Sigmoid colon (tissue), 7 donors: ENCODE measurements at regions of chr12 and their contacts with region 1.

Region 1: DNA sequence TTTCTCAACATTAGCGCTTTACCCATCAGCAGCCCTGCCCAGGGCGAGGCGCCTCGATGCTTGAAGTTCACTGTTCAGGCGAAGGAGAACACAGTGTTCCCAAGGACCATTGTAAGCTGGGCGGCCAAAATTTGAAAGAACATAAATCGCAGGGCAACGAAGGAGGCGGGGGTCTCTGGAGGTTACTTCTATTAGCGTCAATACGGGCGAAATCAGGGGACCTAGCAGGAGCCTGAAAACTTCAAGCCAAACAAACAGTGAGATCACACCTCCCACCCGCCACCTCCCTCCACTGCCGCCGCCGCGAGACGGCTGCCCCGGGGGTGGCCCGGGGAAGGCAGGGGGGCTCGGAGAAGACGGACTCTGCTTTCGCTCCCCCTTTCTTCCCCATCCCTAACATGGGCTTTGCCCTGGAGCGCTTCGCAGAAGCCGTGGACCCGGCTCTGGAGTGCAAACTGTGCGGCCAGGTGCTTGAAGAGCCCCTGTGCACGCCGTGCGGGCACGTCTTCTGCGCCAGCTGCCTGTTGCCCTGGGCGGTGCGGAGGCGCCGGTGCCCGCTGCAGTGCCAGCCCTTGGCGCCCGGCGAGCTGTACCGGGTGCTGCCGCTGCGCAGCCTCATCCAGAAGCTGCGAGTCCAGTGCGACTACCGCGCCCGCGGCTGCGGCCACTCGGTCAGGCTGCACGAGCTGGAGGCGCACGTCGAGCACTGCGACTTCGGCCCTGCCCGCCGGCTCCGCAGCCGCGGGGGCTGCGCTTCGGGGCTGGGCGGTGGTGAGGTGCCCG is at the start of gene PDZRN4:
- DNase-seq: peak; percentile 79
- H3K4me3 ChIP-seq: peak within 1 kb of the TSS; percentile 55 to 71 (median 62)
- H3K27ac ChIP-seq: peak within 1 kb of the TSS; percentile 89 to 95 (median 91)
- H3K4me1 ChIP-seq: peaks cover 0 to 59% (median 35%) of the 10 kb centered on the region in 4 donors
- H3K27me3 ChIP-seq: no peaks in the 10 kb centered on the region
- CTCF ChIP-seq: no peak
- EP300 ChIP-seq: peak in 1 of 4 donors; percentile 51
- POLR2A ChIP-seq: no peak
- total RNA-seq, gene PDZRN4: 71.5 to 98.1 (median 87.7) TPM

Region 2: DNA sequence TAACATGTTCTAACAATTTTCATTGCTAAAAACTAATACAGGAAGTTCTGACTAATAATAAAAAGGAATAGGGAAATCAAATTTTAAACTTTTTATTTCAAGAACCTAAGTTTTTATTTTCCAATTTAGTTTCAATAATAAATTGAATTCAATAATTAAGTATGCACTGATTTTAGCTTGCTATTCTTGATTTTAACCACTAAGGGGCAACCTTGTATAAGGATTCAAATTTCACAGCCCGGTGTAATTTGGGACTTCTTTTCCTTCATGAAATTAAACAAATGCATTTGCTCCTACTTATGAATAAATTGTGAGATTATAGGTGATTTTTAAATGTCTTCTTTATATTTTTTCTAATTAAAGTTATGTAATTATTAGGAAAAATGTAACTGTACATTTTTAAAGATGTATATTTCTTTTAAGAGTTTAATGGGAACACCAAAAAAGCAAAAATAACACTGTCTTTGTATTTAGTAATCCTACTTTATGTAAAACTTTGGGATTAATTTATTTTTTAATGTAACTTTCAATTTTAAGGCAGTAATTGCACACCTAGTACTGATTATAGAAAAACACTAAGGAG is 241.5 kb before region 1 on chr12:
- intact Hi-C with region 1: loop called (anchors 5 kb)
- DNase-seq: no peak
- H3K4me3 ChIP-seq: no peak overlapping the region
- H3K27ac ChIP-seq: no peak overlapping the region
- H3K4me1 ChIP-seq: no peaks in the 10 kb centered on the region
- H3K27me3 ChIP-seq: no peaks in the 10 kb centered on the region
- CTCF ChIP-seq: peak; percentile 46 to 66 (median 58)
- EP300 ChIP-seq: no peak
- POLR2A ChIP-seq: no peak

Region 3: GRCh38 chr12:40988824-40989223 is 199.4 kb before region 1 on chr12:
- intact Hi-C with region 1: loop called (anchors 5 kb)
- DNase-seq: no peak
- H3K4me3 ChIP-seq: no peak overlapping the region
- H3K27ac ChIP-seq: peak overlapping the region; percentile 72 to 78 (median 74)
- H3K4me1 ChIP-seq: peaks cover 0 to 41% (median 30%) of the 10 kb centered on the region in 4 donors
- H3K27me3 ChIP-seq: no peaks in the 10 kb centered on the region
- CTCF ChIP-seq: no peak
- EP300 ChIP-seq: peak in 2 of 4 donors; percentile 46 to 72
- POLR2A ChIP-seq: no peak

Region 4: GRCh38 chr12:41051954-41052353 is 136.3 kb before region 1 on chr12:
- intact Hi-C with region 1: loop called (anchors 5 kb)
- DNase-seq: no peak
- H3K4me3 ChIP-seq: no peak overlapping the region
- H3K27ac ChIP-seq: no peak overlapping the region
- H3K4me1 ChIP-seq: peaks cover 0 to 32% (median 22%) of the 10 kb centered on the region in 4 donors
- H3K27me3 ChIP-seq: no peaks in the 10 kb centered on the region
- CTCF ChIP-seq: no peak
- EP300 ChIP-seq: no peak
- POLR2A ChIP-seq: no peak

Region 5: DNA sequence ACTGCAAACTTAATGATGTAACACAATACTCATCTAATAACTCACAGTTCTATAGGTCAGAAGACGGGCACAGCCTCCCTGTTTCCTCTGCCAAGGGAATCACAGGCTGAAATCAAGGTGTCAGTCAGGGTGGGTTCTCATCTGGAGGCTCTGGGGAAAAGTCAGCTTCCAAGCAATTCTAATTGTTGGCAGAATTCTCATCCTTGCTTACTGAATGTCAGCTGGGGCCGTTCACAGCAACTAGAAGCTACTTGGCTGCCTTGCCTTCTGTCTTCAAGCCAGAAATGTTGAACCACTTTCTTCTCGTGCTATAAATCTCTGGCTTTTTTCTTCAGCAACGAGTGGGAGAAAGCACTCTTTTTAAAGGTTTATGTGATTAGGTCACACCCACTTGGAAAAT is 80.2 kb before region 1 on chr12:
- intact Hi-C with region 1: loop called (anchors 5 kb)
- DNase-seq: peak; percentile 81
- H3K4me3 ChIP-seq: no peak overlapping the region
- H3K27ac ChIP-seq: peak overlapping the region in 2 of 4 donors; percentile 50 to 59
- H3K4me1 ChIP-seq: peaks cover 0 to 36% (median 19%) of the 10 kb centered on the region in 4 donors
- H3K27me3 ChIP-seq: no peaks in the 10 kb centered on the region
- CTCF ChIP-seq: no peak
- EP300 ChIP-seq: peak in 1 of 4 donors; percentile 41
- POLR2A ChIP-seq: no peak

Region 6: DNA sequence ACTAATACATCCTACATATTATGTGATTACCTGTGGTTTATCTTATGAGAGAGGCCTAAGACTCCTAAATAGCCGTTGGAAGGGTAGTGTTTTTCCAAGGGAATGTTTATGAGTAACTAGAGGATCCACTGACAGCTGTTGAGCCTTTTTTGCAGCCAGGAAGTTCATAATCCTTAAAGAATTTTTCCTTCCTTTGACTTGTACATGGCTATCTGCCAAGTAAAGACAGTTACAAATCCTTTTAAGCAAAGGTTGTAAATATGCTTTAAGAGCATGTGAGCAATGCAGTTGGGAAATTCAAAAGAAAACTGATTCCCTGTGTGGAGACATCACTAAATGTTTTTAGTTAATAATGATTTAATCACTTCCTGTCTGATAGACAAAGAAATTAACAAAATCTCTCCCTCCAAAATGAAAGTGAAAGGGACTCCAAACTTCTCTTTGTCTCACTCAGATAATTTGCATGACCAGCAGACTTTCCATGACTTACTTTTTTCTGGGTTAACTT is 333.7 kb after region 1 on chr12:
- intact Hi-C with region 1: loop called (anchors 10 kb)
- DNase-seq: no peak
- H3K4me3 ChIP-seq: no peak overlapping the region
- H3K27ac ChIP-seq: peak overlapping the region in 3 of 4 donors; percentile 45 to 59 (median 50)
- H3K4me1 ChIP-seq: peaks cover 0 to 18% (median 12%) of the 10 kb centered on the region in 4 donors
- H3K27me3 ChIP-seq: no peaks in the 10 kb centered on the region
- CTCF ChIP-seq: no peak
- EP300 ChIP-seq: no peak
- POLR2A ChIP-seq: no peak

Region 7: GRCh38 chr12:42023733-42024494 is 835.7 kb after region 1 on chr12:
- intact Hi-C with region 1: loop called (anchors 5 kb)
- DNase-seq: peak; percentile 82
- H3K4me3 ChIP-seq: peak overlapping the region in 3 of 4 donors; percentile 34 to 49 (median 47)
- H3K27ac ChIP-seq: no peak overlapping the region
- H3K4me1 ChIP-seq: peaks cover 0 to 6% (median 4%) of the 10 kb centered on the region in 4 donors
- H3K27me3 ChIP-seq: no peaks in the 10 kb centered on the region
- CTCF ChIP-seq: peak; percentile 62 to 95 (median 78)
- EP300 ChIP-seq: no peak
- POLR2A ChIP-seq: no peak